ENCODE measurements at regions of chr3 and their contacts with region 1.

Region 1: DNA sequence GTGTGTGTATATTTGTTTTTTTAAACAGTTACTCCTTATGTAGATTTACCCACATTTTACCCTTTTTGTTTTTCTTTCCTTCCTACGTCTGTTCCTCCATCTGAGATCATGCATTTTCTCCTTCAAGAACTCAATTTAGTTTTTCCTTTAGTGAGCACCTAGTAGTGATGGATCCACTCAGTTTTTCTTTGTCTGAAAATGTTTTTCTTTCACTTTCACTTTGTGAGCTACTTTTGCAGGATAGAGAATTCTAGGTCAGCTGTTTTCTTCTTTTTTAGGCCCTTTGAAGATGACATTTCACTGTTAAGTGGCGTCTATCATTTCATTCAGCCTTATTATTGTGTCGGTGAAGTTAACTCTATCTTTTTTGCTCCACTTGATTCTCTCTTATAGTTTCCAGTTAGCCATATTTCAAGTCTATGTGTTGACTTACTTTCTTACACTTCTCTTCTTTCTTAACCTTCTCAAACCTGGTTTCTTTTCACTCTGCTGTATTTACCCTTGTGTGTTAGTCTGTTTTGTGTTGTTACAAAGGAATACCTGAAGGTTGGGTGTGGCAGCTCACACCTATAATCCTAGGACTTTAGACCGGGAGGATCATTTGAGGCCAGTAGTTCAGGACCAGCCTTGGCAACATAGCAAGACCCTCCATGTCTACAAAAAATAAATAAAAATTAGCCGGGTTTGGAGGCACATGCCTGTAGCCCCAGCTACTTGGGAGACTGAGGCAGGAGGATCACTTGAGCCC is 55.8 kb downstream of the PRKCI start:
- DNase-seq: no peak
- H3K4me3 Mint-ChIP-seq: peak overlapping the region; percentile 83
- H3K27ac Mint-ChIP-seq: peak overlapping the region; percentile 86
- H3K4me1 Mint-ChIP-seq: peaks cover 30% of the 10 kb centered on the region
- H3K27me3 Mint-ChIP-seq: no peaks in the 10 kb centered on the region

Region 2: GRCh38 chr3:169260296-169260695 is 1017.7 kb before region 1 on chr3:
- intact Hi-C with region 1: no loop called
- DNase-seq: no peak
- H3K4me3 Mint-ChIP-seq: no peak overlapping the region
- H3K27ac Mint-ChIP-seq: no peak overlapping the region
- H3K4me1 Mint-ChIP-seq: no peaks in the 10 kb centered on the region
- H3K27me3 Mint-ChIP-seq: peaks cover 6% of the 10 kb centered on the region

Region 3: DNA sequence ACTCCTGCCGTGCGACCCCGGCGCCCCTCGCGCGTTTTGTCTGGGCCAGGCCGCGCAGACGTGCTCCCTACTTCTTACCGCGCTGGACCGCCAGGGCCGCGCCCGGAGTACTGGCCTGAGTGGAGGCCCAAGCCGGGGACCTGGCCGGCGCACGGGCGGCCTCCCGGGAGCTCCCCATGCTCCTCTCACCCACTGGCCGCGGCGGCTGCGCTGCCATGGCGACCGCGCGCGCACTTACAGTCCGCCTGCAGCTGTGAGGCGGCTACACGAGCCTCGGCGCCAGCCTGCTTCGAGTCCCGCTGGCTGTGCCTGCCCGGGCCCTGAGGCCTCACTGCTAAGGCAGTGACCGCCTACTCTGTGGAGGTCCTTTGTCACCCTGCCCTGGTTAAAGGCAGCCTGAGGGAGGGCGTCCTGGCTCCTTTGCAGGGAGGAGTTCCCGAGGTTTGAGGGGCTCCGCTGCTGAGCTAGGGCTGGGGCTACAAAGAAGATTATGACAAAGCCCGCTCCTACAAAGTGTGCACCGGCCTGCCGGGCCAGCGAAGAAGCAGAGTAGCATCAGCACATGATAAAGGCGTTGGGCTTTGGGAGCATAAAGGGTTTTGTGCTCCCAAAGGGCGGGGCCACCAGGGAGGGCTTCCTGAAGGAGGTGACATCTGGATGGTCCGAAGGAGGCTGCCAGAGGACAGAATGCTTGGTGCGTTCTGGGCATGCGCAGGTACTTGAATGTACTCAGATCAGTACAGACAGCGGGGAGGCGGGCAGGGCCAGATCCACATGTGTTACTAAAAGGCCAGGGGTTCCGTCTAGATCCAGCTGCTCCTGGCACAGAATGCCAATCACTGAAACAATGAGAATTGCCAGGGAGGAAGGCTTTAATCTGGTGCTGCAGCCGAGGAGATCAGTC is 465.4 kb before region 1 on chr3 and contains the starts of genes LRRC34 and LRRIQ4:
- intact Hi-C with region 1: no loop called
- DNase-seq: peak; percentile 64
- H3K4me3 Mint-ChIP-seq: peak within 1 kb of the TSS; percentile 83
- H3K27ac Mint-ChIP-seq: peak within 1 kb of the TSS; percentile 89
- H3K4me1 Mint-ChIP-seq: peaks cover 49% of the 10 kb centered on the region
- H3K27me3 Mint-ChIP-seq: peaks cover 6% of the 10 kb centered on the region
- total RNA-seq, gene LRRC34: 2.8 and 2.9 TPM in 2 replicates
- total RNA-seq, gene LRRIQ4: 0.10 and 0.12 TPM in 2 replicates

Region 4: DNA sequence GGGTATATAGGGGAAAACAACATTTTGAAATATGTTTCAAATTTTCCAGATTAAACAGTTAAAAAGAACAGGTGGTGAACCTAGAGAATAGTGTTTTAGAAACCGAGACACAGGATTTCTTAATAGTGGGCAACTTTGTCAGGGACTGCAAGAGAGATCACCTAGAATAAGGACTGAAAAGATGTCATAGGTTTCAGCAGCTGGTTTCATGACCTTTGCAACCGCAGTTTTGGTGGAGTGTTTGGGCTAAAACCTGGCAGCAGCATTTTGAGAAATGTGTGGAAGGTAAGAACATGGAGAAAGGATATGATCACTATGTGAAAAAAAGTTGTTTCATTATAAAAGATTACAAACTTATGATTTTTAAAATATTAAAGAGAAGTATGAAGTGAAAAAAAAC is 20.9 kb before region 1 on chr3:
- intact Hi-C with region 1: loop called (anchors 2 kb)
- DNase-seq: no peak
- H3K4me3 Mint-ChIP-seq: no peak overlapping the region
- H3K27ac Mint-ChIP-seq: peak overlapping the region; percentile 72
- H3K4me1 Mint-ChIP-seq: peaks cover 34% of the 10 kb centered on the region
- H3K27me3 Mint-ChIP-seq: no peaks in the 10 kb centered on the region